Esophagus muscularis mucosa (tissue), 4 donors: ENCODE measurements at regions of chr16 and their contacts with region 1.

Region 1: GRCh38 chr16:71412270-71413160 is 29.3 kb downstream of the TLE7 start:
- DNase-seq: no peak
- H3K4me3 ChIP-seq: no peak overlapping the region
- H3K27ac ChIP-seq: no peak overlapping the region
- H3K4me1 ChIP-seq: peaks cover 0 to 9% (median 3%) of the 10 kb centered on the region in 4 donors
- H3K27me3 ChIP-seq: peaks cover 0 to 55% (median 4%) of the 10 kb centered on the region in 4 donors
- CTCF ChIP-seq: peak; percentile 74 to 89 (median 88)
- EP300 ChIP-seq: no peak
- POLR2A ChIP-seq: no peak

Region 2: DNA sequence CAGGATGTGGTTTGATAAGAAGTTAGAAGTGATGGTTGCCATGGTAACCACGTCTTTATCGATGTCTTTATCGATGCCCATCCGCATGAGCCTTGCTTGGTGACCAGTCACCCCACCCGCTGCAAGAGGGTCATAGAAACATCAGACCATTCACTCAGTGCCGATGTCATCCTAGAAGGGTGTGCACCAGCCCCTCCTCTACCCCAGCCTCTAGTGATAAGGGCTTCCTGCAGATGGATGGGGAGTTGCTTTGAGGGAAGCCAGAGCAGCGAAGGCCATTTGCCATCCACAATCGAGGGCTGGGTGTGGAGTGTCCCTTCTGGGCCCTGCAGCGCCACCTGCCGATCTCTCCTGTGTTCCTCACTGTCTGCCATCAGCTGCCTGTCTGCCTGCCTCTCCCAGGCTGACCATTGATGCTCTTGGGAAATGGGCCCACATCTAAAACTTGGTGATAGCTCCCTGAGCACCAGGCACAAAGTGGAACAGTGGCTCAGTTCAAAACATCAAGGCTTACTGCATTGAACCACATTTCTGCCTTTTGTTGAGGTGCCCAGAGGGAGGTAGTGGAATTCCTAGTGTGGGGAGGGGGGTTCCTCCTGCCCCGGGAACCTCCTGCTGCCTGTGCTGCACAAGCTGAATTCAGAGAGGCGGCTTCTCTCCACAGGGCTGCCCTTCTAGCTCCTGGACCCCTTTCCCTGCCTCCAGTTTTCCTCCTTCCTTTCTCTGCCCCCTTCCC is 45.1 kb before region 1 on chr16:
- intact Hi-C with region 1: no loop called
- DNase-seq: no peak
- H3K4me3 ChIP-seq: no peak overlapping the region
- H3K27ac ChIP-seq: no peak overlapping the region
- H3K4me1 ChIP-seq: no peaks in the 10 kb centered on the region
- H3K27me3 ChIP-seq: peaks cover 0 to 50% (median 0%) of the 10 kb centered on the region in 4 donors
- CTCF ChIP-seq: peak in 2 of 3 experiments; percentile 9 to 18
- EP300 ChIP-seq: no peak
- POLR2A ChIP-seq: no peak

Region 3: GRCh38 chr16:71499775-71500364 is 87.4 kb after region 1 on chr16:
- intact Hi-C with region 1: loop called (anchors 1 kb)
- DNase-seq: no peak
- H3K4me3 ChIP-seq: no peak overlapping the region
- H3K27ac ChIP-seq: no peak overlapping the region
- H3K4me1 ChIP-seq: no peaks in the 10 kb centered on the region
- H3K27me3 ChIP-seq: no peaks in the 10 kb centered on the region
- CTCF ChIP-seq: peak; percentile 68 to 70 (median 68)
- EP300 ChIP-seq: no peak
- POLR2A ChIP-seq: no peak

Region 4: DNA sequence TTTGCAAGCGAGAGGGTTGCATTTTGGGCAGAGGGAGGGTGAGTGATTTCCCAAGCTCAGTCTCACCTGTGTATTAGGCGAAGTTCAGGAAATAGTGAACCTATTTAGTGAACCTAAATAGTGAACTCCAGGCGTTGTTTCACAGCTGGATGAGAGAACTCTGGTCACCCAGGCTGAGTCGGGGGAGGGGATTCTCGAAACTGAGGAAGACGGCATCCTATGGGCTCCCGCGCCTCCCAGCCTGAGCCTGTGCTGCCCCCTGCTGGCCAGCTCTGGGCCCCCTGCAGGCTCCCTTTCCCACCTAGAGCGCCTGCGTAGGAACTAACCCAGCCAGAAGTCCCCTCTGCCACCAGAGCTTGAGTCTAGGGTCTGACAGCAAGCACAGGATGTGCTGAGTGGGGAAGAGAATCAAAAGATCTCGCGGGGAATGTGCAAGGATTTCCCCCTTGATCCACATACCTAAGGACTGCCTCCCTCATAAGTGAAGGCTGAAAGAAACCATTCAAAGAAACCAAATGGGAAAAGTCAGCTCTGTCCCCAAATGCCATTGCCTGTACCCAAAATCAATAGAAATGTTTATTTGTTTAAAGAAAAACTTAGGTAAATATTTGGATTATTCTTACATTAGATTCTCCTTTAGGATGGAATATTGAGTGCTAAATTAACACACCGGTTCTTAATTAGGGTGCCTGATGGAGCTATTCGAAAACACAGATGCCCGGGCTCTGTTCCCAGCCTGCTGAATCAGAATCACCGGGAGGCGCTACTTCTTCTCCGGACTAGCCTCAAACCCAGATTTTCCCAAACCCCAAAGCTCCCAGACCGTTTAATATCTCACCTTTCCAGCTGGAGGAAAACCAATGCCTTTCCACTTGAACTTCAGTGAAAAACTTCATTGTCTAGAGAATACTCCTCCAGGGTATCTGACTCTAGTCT is 198.7 kb after region 1 on chr16:
- intact Hi-C with region 1: loop called (anchors 5 kb)
- DNase-seq: no peak
- H3K4me3 ChIP-seq: no peak overlapping the region
- H3K27ac ChIP-seq: no peak overlapping the region
- H3K4me1 ChIP-seq: peaks cover 0 to 5% (median 4%) of the 10 kb centered on the region in 4 donors
- H3K27me3 ChIP-seq: peaks cover 0 to 66% (median 2%) of the 10 kb centered on the region in 4 donors
- CTCF ChIP-seq: peak; percentile 60 to 82 (median 69)
- EP300 ChIP-seq: no peak
- POLR2A ChIP-seq: no peak